Mammary epithelial cell (primary cell): ENCODE measurements at regions of chr7 and their contacts with region 1.

Region 1: GRCh38 chr7:36487756-36488336 is 98.2 kb downstream of the ANLN start:
- DNase-seq: peak; percentile 60
- H3K4me3 ChIP-seq: no peak overlapping the region
- H3K27ac ChIP-seq: no peak overlapping the region
- H3K4me1 ChIP-seq: no peaks in the 10 kb centered on the region
- H3K27me3 ChIP-seq: no peaks in the 10 kb centered on the region
- CTCF ChIP-seq: peak; percentile 84 to 85

Region 2: DNA sequence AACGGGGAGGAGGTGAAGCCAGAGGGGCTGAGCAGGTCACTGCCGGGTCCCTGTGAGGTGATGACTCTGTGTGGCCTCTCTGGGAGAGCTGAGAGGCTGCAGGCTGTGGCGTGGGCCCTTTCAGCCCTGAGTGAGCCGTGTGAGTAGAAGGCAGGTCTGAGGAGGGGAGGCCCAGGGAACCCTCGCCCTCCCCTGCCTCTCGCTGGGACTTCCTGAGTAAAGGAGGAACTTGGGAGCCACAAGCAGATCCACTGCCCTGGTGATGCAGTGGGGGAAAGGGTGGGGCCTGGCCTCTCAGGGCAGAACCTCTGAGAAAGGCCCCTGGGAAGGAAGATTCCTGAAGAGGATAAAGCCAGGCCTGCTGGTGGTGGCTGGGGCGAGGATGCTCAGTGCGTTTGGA is 312.0 kb before region 1 on chr7:
- CTCF ChIA-PET with region 1: no interaction called
- dilution Hi-C with region 1: no loop called
- in situ Hi-C with region 1: no loop called
- intact Hi-C with region 1: no loop called
- DNase-seq: no peak
- H3K4me3 ChIP-seq: no peak overlapping the region
- H3K27ac ChIP-seq: no peak overlapping the region
- H3K4me1 ChIP-seq: peaks cover 4% of the 10 kb centered on the region
- H3K27me3 ChIP-seq: no peaks in the 10 kb centered on the region
- CTCF ChIP-seq: no peak

Region 3: DNA sequence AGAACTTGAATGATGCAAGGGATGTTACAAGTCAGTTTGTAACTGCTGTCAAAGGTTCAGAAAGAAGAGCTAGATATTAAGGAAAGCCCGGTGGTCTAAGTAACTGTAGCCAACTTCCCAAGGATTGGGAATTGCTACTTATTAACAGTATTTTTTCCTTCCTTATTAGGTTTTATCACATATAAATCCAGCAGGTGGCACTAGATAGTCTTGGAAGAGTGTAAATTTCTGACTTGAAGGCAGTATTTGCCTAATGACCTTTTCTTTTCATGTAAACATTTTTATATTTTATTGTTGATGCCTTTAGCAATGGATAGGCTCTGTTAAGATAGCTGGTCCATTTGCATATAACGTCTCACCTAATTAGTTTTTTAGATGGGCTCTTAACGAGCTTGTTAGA is 47.0 kb before region 1 on chr7:
- CTCF ChIA-PET with region 1: interaction called, 3 read pairs
- dilution Hi-C with region 1: no loop called
- in situ Hi-C with region 1: no loop called
- intact Hi-C with region 1: loop called (anchors 5 kb)
- DNase-seq: peak; percentile 6
- H3K4me3 ChIP-seq: no peak overlapping the region
- H3K27ac ChIP-seq: no peak overlapping the region
- H3K4me1 ChIP-seq: no peaks in the 10 kb centered on the region
- H3K27me3 ChIP-seq: no peaks in the 10 kb centered on the region
- CTCF ChIP-seq: peak; percentile 45 to 50

Region 4: DNA sequence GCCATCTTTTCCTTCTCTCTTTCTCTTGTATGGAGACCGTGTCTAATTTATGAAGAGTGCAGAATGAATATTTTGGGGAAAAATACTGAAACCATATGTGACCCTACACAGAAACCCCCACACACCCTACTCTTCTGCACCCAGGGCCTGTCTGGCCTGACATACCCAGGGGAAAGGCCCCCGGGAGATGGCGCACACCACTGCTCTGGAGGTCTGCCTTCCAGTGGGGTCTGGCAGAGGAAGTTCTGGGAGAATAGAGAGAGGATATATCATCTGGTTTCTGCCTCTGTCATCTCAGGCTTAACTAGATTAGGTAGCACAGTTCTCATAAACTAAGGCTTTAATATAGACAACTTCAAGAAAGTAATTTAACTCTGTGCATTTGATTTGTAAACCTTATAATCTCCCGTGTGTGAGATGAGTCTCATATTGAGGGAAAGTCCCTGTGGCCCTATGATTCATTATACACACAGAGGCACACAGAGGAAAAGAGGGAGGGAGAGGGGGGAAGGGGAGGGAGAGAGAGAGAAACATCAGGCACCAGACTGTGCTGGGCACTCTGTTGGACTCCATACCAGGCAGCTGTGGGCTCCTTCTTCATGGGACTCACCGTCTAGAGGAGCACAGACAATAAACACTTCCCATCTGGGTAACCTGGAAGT is 113.2 kb after region 1 on chr7:
- CTCF ChIA-PET with region 1: no interaction called
- dilution Hi-C with region 1: no loop called
- in situ Hi-C with region 1: no loop called
- intact Hi-C with region 1: loop called (anchors 10 kb)
- DNase-seq: peak; percentile 89
- H3K4me3 ChIP-seq: no peak overlapping the region
- H3K27ac ChIP-seq: peak overlapping the region; percentile 33
- H3K4me1 ChIP-seq: peaks cover 36% of the 10 kb centered on the region
- H3K27me3 ChIP-seq: no peaks in the 10 kb centered on the region
- CTCF ChIP-seq: no peak

Region 5: GRCh38 chr7:36659172-36659516 is 171.3 kb after region 1 on chr7:
- CTCF ChIA-PET with region 1: no interaction called
- dilution Hi-C with region 1: loop called (anchors 10 kb)
- in situ Hi-C with region 1: no loop called
- intact Hi-C with region 1: no loop called
- DNase-seq: peak; percentile 97
- H3K4me3 ChIP-seq: no peak overlapping the region
- H3K27ac ChIP-seq: peak overlapping the region; percentile 93
- H3K4me1 ChIP-seq: peaks cover 34% of the 10 kb centered on the region
- H3K27me3 ChIP-seq: no peaks in the 10 kb centered on the region
- CTCF ChIP-seq: no peak

Region 6: GRCh38 chr7:36871863-36872262 is 384.0 kb after region 1 on chr7:
- CTCF ChIA-PET with region 1: no interaction called
- dilution Hi-C with region 1: no loop called
- in situ Hi-C with region 1: loop called in 1 of 2 experiments (anchors 25 kb)
- intact Hi-C with region 1: no loop called
- DNase-seq: no peak
- H3K4me3 ChIP-seq: no peak overlapping the region
- H3K27ac ChIP-seq: no peak overlapping the region
- H3K4me1 ChIP-seq: no peaks in the 10 kb centered on the region
- H3K27me3 ChIP-seq: no peaks in the 10 kb centered on the region
- CTCF ChIP-seq: no peak

Region 7: DNA sequence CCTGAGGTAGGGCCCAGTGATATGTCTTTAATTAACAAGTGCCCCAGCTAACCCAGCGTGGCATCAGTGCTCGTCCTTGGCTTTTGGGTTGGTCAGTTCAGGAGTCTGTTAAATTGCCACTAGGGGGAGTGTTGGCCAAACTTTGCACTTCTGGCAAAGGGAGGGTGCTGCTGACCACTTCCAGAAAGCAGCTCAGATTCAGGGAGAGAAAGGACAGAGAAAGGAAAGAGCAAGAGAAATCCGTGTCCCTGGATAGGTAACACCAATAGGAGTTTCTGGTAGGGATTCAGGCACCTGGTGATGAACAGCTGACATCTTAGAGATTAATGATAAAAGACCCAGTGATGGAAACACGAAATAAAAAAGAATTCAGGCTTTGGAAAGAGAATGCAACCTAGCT is 479.5 kb after region 1 on chr7:
- CTCF ChIA-PET with region 1: no interaction called
- dilution Hi-C with region 1: no loop called
- in situ Hi-C with region 1: no loop called
- intact Hi-C with region 1: loop called (anchors 2 kb)
- DNase-seq: peak; percentile 52
- H3K4me3 ChIP-seq: no peak overlapping the region
- H3K27ac ChIP-seq: no peak overlapping the region
- H3K4me1 ChIP-seq: no peaks in the 10 kb centered on the region
- H3K27me3 ChIP-seq: no peaks in the 10 kb centered on the region
- CTCF ChIP-seq: peak; percentile 74 to 78

Region 8: GRCh38 chr7:36986429-36987362 is 498.9 kb after region 1 on chr7:
- CTCF ChIA-PET with region 1: no interaction called
- dilution Hi-C with region 1: no loop called
- in situ Hi-C with region 1: loop called (anchors 25 kb)
- intact Hi-C with region 1: no loop called
- DNase-seq: peak; percentile 41
- H3K4me3 ChIP-seq: no peak overlapping the region
- H3K27ac ChIP-seq: no peak overlapping the region
- H3K4me1 ChIP-seq: no peaks in the 10 kb centered on the region
- H3K27me3 ChIP-seq: no peaks in the 10 kb centered on the region
- CTCF ChIP-seq: peak; percentile 94 to 97